Astrocyte of the cerebellum (primary cell): ENCODE measurements at regions of chr11 and their contacts with region 1.

Region 1: DNA sequence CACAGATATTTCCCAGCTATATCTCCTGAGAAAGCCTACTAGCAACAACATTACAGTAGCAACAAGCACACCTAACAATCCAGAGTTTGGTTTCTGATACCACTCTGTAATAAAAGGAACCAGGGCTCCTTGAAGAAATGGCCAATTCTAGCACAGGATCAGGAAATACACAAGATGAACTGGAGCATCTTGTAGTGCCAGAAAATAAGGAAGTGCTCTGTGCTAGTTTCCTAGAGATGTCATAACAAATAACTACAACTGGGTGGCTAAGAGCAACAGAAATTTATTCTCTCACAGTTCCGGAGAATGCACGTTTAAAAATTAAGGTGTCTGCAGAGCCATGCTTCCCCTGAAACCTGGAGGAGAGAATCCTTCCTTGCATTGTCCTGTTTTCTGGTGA is 217.8 kb downstream of the KIRREL3 start:
- DNase-seq: no peak
- H3K4me3 ChIP-seq: no peak overlapping the region
- CTCF ChIP-seq: no peak

Region 2: GRCh38 chr11:126834149-126834548 is 51.3 kb after region 1 on chr11:
- in situ Hi-C with region 1: loop called (anchors 5 kb)
- DNase-seq: peak; percentile 79
- H3K4me3 ChIP-seq: no peak overlapping the region
- CTCF ChIP-seq: no peak